ENCODE measurements at regions of chr2 and their contacts with region 1.

Region 1: DNA sequence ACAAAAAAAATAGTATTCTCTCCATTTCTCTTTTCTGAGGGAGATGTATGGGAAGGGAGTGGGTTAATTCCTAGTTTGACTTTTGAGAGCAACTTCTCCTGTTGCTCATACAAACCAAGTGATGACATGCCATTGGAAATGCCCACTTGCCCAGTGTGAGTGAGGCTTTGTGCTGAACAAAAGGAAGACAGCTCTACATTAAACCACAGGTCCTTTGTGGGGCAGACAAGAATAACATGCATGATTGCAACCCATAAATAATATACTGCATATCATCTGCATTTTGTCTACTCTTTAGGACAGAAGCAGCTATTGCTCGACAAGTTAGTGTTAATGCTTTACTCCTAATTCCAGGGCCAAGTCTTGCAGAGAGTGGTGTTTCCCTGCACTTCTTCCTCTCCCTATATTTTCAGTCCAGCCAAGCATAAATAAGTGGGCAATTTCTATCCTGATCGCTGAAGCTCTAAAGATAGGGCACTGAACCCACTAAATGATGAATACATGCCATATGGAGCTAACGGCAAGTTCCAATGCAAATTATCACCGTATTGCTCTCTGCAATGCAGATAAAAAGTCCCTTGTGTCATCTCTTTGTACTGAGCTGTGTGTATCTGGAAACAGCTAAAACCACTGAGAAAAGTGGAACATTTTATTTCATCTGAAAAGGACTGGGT is 19.4 kb upstream of the EHBP1 start:
- DNase-seq: no peak
- H3K4me3 ChIP-seq: no peak overlapping the region
- H3K27me3 ChIP-seq: no peaks in the 10 kb centered on the region
- CTCF ChIP-seq: no peak

Region 2: GRCh38 chr2:62672601-62673000 is 13.5 kb before region 1 on chr2:
- CTCF ChIA-PET with region 1: interaction called, 10 read pairs
- POLR2A ChIA-PET with region 1: no interaction called
- DNase-seq: no peak
- H3K4me3 ChIP-seq: no peak overlapping the region
- H3K27me3 ChIP-seq: no peaks in the 10 kb centered on the region
- CTCF ChIP-seq: no peak

Region 3: GRCh38 chr2:62713837-62714236 is 27.7 kb after region 1 on chr2:
- CTCF ChIA-PET with region 1: no interaction called
- POLR2A ChIA-PET with region 1: no interaction called
- DNase-seq: no peak
- H3K4me3 ChIP-seq: no peak overlapping the region
- H3K27me3 ChIP-seq: no peaks in the 10 kb centered on the region
- CTCF ChIP-seq: no peak

Region 4: DNA sequence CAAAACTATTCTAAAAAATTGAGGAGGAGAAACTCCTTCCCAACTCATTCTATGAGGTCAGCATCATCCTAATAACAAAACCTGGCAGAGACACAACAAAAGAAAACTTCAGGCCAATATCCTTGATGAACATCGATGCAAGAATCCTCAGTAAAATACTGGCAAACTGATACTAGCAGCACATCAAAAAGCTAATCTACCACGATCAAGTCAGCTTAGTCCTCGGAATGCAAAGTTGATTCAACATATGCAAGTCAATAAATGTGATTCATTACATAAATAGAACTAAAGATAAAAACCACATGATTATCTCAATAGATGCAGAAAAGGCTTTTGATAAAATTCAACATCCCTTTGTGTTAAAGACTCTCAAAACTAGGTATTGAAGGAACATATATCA is 82.5 kb after region 1 on chr2:
- CTCF ChIA-PET with region 1: no interaction called
- POLR2A ChIA-PET with region 1: no interaction called
- DNase-seq: no peak
- H3K4me3 ChIP-seq: no peak overlapping the region
- H3K27me3 ChIP-seq: no peaks in the 10 kb centered on the region
- CTCF ChIP-seq: no peak

Measured in BJ (cell line).